ENCODE measurements at regions of chr5 and their contacts with region 1.

Region 1: DNA sequence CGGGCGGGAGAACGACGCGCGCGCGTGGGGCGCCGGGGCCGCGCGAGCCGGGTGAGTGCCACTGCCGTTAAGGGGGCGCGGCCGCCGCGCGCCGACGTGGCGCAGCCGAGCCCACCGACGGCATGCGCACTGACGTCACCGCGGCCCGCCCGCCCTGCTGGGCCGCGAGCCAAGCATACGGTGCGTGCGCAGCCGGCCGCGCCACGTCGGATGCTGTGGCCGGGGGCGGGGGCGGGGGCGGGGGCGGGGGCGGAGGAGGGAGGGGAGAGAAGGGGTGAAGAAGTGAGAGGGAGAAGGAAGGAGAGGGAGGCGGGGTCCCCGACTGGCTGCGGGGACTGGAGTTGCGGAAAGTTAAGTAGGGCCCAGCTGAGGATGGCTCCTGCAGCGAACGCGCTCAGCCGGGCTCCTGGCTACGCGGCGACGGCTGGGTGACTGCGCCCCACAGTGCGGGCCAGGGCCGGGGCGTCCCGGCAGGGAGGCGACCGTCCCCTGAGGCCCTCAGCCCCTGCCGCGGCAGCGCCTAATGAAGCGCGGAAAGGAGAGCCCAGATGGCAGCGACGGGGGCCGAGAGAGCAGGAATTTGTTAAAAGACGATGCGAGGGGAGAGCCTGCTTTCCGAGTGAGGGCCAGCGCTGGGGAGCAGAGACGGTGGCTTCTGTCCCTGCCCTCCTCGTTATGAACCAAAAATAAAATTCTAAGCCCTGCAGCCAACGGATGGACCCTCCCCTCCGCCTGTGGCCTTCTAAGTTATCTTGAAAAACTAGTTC is at the start of gene DAP:
- DNase-seq: peak; percentile 88
- ATAC-seq: peak; percentile 88
- H3K4me3 ChIP-seq: peak within 1 kb of the TSS; percentile 96
- H3K27ac ChIP-seq: peak within 1 kb of the TSS; percentile 99
- H3K4me1 ChIP-seq: peaks cover 27% of the 10 kb centered on the region
- H3K27me3 ChIP-seq: no peaks in the 10 kb centered on the region
- CTCF ChIP-seq: no peak
- POLR2A ChIP-seq: peak; percentile 87
- RAD21 ChIP-seq: no peak
- total RNA-seq, gene DAP: 44.4 and 49.6 TPM in 2 replicates

Region 2: DNA sequence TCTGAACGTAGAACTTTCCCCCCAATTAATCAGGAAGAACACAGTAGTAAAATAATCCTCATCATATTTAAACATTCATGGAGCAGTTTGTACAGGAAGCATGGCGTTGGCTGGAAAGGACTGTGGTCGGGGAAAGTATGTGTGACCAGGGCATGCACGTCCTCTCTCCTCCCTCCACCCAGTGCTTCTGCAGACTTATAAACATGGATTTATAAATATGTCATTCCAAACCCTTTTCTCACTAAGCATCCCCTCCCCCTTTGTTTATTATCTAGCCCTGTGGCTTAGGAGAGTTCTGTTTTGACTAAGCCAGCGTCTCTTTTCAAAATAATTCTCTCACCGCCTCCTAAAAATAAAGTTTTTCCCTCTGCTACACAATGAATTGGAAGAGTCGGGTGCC is 70.1 kb after region 1 on chr5:
- CTCF ChIA-PET with region 1: no interaction called
- POLR2A ChIA-PET with region 1: interaction called, 3 read pairs
- dilution Hi-C with region 1: no loop called
- in situ Hi-C with region 1: no loop called
- intact Hi-C with region 1: loop called (anchors 1 kb)
- DNase-seq: peak; percentile 95
- ATAC-seq: peak; percentile 96
- H3K4me3 ChIP-seq: no peak overlapping the region
- H3K27ac ChIP-seq: peak overlapping the region; percentile 94
- H3K4me1 ChIP-seq: peaks cover 23% of the 10 kb centered on the region
- H3K27me3 ChIP-seq: no peaks in the 10 kb centered on the region
- CTCF ChIP-seq: no peak
- POLR2A ChIP-seq: peak; percentile 14; the same call in 1 of the 2 replicates
- RAD21 ChIP-seq: 0 out of 2 replicates have a peak, but pooled peaks have one; percentile 11

Region 3: DNA sequence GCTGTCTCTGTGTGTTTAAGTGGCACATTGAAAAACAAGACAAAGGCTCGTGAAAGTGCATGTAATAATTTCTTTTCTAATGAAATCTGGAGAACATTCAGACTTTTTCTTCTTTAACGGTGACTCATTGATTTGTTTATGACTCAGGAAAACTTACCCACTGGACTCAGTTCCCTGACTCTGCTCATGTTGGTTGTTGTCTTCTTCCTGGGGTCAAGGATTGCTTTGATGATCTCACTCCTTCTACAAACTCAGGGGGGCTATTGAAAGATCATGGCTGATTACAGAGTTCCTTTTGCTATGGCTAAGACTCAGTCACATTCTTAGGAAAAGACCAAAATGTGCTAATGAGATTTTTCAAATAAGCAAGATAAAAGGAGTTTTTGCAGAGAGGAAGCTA is 140.8 kb after region 1 on chr5:
- CTCF ChIA-PET with region 1: no interaction called
- POLR2A ChIA-PET with region 1: no interaction called
- dilution Hi-C with region 1: no loop called
- in situ Hi-C with region 1: no loop called
- intact Hi-C with region 1: loop called (anchors 5 kb)
- DNase-seq: peak; percentile 87
- ATAC-seq: peak; percentile 88
- H3K4me3 ChIP-seq: no peak overlapping the region
- H3K27ac ChIP-seq: peak overlapping the region; percentile 43
- H3K4me1 ChIP-seq: peaks cover 11% of the 10 kb centered on the region
- H3K27me3 ChIP-seq: no peaks in the 10 kb centered on the region; the same call in 1 of the 2 replicates
- CTCF ChIP-seq: no peak
- POLR2A ChIP-seq: no peak
- RAD21 ChIP-seq: no peak

Region 4: GRCh38 chr5:10987930-10988504 is 226.7 kb after region 1 on chr5:
- CTCF ChIA-PET with region 1: no interaction called
- POLR2A ChIA-PET with region 1: interaction called, 3 read pairs
- dilution Hi-C with region 1: no loop called
- in situ Hi-C with region 1: no loop called
- intact Hi-C with region 1: loop called (anchors 10 kb)
- DNase-seq: no peak
- ATAC-seq: peak; percentile 53; the same call in 1 of the 2 replicates
- H3K4me3 ChIP-seq: no peak overlapping the region
- H3K27ac ChIP-seq: no peak overlapping the region
- H3K4me1 ChIP-seq: no peaks in the 10 kb centered on the region
- H3K27me3 ChIP-seq: peaks cover 13% of the 10 kb centered on the region
- CTCF ChIP-seq: peak; percentile 36
- POLR2A ChIP-seq: no peak
- RAD21 ChIP-seq: peak; percentile 31; the same call in 1 of the 2 replicates